ENCODE measurements at regions of chr19 and their contacts with region 1.

Region 1: GRCh38 chr19:10562609-10563008 is 3.2 kb downstream of the KRI1 start:
- H3K4me3 ChIP-seq: no peak overlapping the region
- H3K27ac ChIP-seq: no peak overlapping the region
- H3K4me1 ChIP-seq: peaks cover 10% of the 10 kb centered on the region
- CTCF ChIP-seq: no peak

Region 2: GRCh38 chr19:10551698-10552301 is 10.8 kb before region 1 on chr19:
- CTCF ChIA-PET with region 1: interaction called, 4 read pairs
- POLR2A ChIA-PET with region 1: interaction called, 14 read pairs
- H3K4me3 ChIP-seq: no peak overlapping the region
- H3K27ac ChIP-seq: no peak overlapping the region
- H3K4me1 ChIP-seq: no peaks in the 10 kb centered on the region
- CTCF ChIP-seq: no peak

Region 3: GRCh38 chr19:10587022-10587789 is 24.6 kb after region 1 on chr19 and contains the start of gene AP1M2:
- CTCF ChIA-PET with region 1: no interaction called
- POLR2A ChIA-PET with region 1: no interaction called
- H3K4me3 ChIP-seq: peak within 1 kb of the TSS; percentile 34
- H3K27ac ChIP-seq: no peak within 1 kb of the TSS
- H3K4me1 ChIP-seq: no peaks in the 10 kb centered on the region
- CTCF ChIP-seq: no peak

Region 4: DNA sequence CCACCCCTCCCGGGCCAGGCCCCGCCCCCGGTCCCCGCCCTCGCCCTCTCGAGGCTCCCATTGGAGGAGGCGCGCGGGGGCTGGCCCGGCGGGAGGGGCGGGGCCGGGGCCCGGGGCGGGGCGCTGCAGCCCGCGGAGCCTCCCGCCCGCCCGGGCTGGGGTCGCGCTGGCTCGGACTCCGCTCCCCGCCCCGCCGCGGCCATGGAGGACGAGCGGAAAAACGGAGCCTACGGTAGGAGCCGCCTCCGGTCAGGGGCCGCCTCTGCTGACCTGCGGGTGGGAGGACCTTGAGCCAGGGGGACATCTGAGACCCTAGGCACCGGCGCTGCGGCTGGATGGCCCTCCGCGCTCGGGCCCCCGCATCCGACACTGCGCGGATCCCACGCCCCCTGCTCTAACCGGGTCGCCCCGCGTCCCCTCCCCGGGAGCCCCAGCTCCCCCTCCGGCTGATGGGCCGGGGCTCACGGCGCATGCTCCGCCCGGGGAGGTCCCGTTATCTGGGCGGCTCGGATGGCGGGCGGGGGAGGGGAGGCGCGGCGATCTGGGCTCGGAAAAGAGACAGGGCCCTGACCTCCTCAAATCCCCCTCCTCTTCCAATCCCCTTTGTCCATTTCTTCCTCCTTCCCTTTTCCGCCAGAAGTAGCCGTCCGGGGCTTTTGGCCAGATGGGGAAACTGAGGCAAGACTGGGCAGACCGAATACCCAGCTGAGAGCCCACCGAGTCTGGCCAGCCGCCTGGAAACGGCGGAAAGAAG is 39.9 kb after region 1 on chr19:
- CTCF ChIA-PET with region 1: no interaction called
- POLR2A ChIA-PET with region 1: no interaction called
- H3K4me3 ChIP-seq: peak overlapping the region; percentile 71
- H3K27ac ChIP-seq: peak overlapping the region; percentile 44; the same call in 1 of the 2 replicates
- H3K4me1 ChIP-seq: no peaks in the 10 kb centered on the region
- CTCF ChIP-seq: no peak

Region 5: GRCh38 chr19:10636304-10636972 is 73.8 kb after region 1 on chr19:
- CTCF ChIA-PET with region 1: no interaction called
- POLR2A ChIA-PET with region 1: no interaction called
- H3K4me3 ChIP-seq: no peak overlapping the region
- H3K27ac ChIP-seq: no peak overlapping the region
- H3K4me1 ChIP-seq: no peaks in the 10 kb centered on the region
- CTCF ChIP-seq: no peak

Region 6: GRCh38 chr19:10670182-10670581 is 107.6 kb after region 1 on chr19:
- CTCF ChIA-PET with region 1: no interaction called
- POLR2A ChIA-PET with region 1: no interaction called
- H3K4me3 ChIP-seq: no peak overlapping the region
- H3K27ac ChIP-seq: no peak overlapping the region
- H3K4me1 ChIP-seq: peaks cover 4% of the 10 kb centered on the region; the same call in 1 of the 2 replicates
- CTCF ChIP-seq: no peak